ENCODE measurements at regions of chr5 and their contacts with region 1.

Region 1: GRCh38 chr5:173263566-173263965 is 28.6 kb upstream of the NKX2-5 start:
- DNase-seq: no peak
- ATAC-seq: no peak
- H3K4me3 Mint-ChIP-seq: no peak overlapping the region
- H3K27ac Mint-ChIP-seq: no peak overlapping the region
- H3K4me1 Mint-ChIP-seq: no peaks in the 10 kb centered on the region
- H3K27me3 Mint-ChIP-seq: peaks cover 21% of the 10 kb centered on the region

Region 2: GRCh38 chr5:173045482-173045881 is 218.1 kb before region 1 on chr5:
- CTCF ChIA-PET with region 1: no interaction called
- POLR2A ChIA-PET with region 1: interaction called, 10 read pairs
- intact Hi-C with region 1: no loop called
- DNase-seq: no peak
- ATAC-seq: no peak
- H3K4me3 Mint-ChIP-seq: no peak overlapping the region
- H3K27ac Mint-ChIP-seq: no peak overlapping the region
- H3K4me1 Mint-ChIP-seq: peaks cover 1% of the 10 kb centered on the region
- H3K27me3 Mint-ChIP-seq: no peaks in the 10 kb centered on the region